ENCODE measurements at regions of chr11 and their contacts with region 1.

Region 1: GRCh38 chr11:128299132-128299726 is 288.1 kb downstream of the ETS1 start:
- DNase-seq: no peak
- ATAC-seq: peak; percentile 16
- H3K4me3 ChIP-seq: no peak overlapping the region
- H3K27ac ChIP-seq: peak overlapping the region in 1 of 2 donors; percentile 51
- H3K4me1 ChIP-seq: peaks cover 3 to 6% of the 10 kb centered on the region in 2 donors
- H3K27me3 ChIP-seq: no peaks in the 10 kb centered on the region

Region 2: DNA sequence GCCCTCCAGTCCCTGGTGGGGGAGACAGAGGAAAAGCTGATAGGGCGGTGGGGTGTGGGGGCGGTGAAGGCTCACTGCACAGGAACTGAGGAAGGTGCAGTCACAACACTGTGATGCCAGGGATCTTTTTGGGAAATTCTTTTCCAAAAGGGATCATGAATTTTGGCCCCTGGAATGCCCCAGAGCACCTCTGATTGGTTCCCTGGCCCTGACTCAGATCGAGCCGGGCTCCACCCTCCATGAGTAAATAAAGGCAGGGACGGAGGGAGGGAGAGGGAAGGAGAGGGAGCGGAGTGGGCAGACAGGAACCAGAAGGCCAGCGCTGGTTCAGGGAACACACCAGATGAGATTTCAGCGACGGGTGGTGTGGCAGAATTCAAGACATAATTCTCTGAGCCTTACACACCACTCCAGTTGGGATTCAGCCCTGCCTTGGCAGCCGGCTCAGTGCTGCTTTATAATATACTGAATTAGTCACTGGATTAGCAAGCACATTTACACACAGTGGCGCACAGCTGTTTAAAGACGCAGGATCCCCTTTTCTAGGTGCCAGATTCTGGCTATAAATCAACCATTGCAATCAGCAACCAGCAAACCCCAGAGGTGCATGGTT is 207.9 kb after region 1 on chr11:
- intact Hi-C with region 1: loop called in 1 of 2 experiments (anchors 5 kb)
- DNase-seq: peak; percentile 95
- ATAC-seq: peak; percentile 90
- H3K4me3 ChIP-seq: no peak overlapping the region
- H3K27ac ChIP-seq: peak overlapping the region; percentile 69 to 97
- H3K4me1 ChIP-seq: peaks cover 8 to 9% of the 10 kb centered on the region in 2 donors
- H3K27me3 ChIP-seq: no peaks in the 10 kb centered on the region